ENCODE measurements at regions of chr1 and their contacts with region 1.

Region 1: GRCh38 chr1:48889082-48889481 is 112.4 kb upstream of the BEND5 start:
- DNase-seq: peak; percentile 72
- H3K4me3 ChIP-seq: no peak overlapping the region
- H3K27ac ChIP-seq: peak overlapping the region in 1 of 2 experiments; percentile 98; a peak in 2 of 4 replicates
- H3K4me1 ChIP-seq: peaks cover 0 to 31% of the 10 kb centered on the region in 2 experiments; a peak in 2 of 4 replicates
- H3K27me3 ChIP-seq: no peaks in the 10 kb centered on the region
- CTCF ChIP-seq: no peak
- EP300 ChIP-seq: peak in 1 of 2 experiments; percentile 94; a peak in 2 of 4 replicates
- RAD21 ChIP-seq: peak; percentile 26; the same call in 1 of the 2 replicates

Region 2: GRCh38 chr1:48776393-48777218 is 112.5 kb before region 1 on chr1 and contains the start of gene BEND5:
- CTCF ChIA-PET with region 1: no interaction called
- POLR2A ChIA-PET with region 1: no interaction called
- DNase-seq: peak; percentile 94
- H3K4me3 ChIP-seq: peak within 1 kb of the TSS; percentile 69 to 85
- H3K27ac ChIP-seq: peak within 1 kb of the TSS in 1 of 2 experiments; percentile 86; a peak in 2 of 4 replicates
- H3K4me1 ChIP-seq: peaks cover 4 to 14% of the 10 kb centered on the region in 2 experiments; a peak in 1 of 4 replicates
- H3K27me3 ChIP-seq: no peaks in the 10 kb centered on the region
- CTCF ChIP-seq: no peak
- EP300 ChIP-seq: no peak
- RAD21 ChIP-seq: no peak
- polyA plus RNA-seq, gene BEND5: 4.3 and 5.6 TPM in 2 replicates

Region 3: GRCh38 chr1:48859431-48859830 is 29.7 kb before region 1 on chr1:
- CTCF ChIA-PET with region 1: no interaction called
- POLR2A ChIA-PET with region 1: no interaction called
- DNase-seq: no peak
- H3K4me3 ChIP-seq: no peak overlapping the region
- H3K27ac ChIP-seq: no peak overlapping the region
- H3K4me1 ChIP-seq: peaks cover 0 to 4% of the 10 kb centered on the region in 2 experiments; a peak in 1 of 4 replicates
- H3K27me3 ChIP-seq: no peaks in the 10 kb centered on the region
- CTCF ChIP-seq: no peak
- EP300 ChIP-seq: no peak
- RAD21 ChIP-seq: no peak

Region 4: GRCh38 chr1:48878191-48878940 is 10.7 kb before region 1 on chr1:
- CTCF ChIA-PET with region 1: interaction called, 11 read pairs
- POLR2A ChIA-PET with region 1: interaction called, 4 read pairs
- DNase-seq: peak; percentile 30
- H3K4me3 ChIP-seq: peak overlapping the region; percentile 10 to 35; a peak in 2 of 4 replicates
- H3K27ac ChIP-seq: peak overlapping the region; percentile 88 to 89
- H3K4me1 ChIP-seq: peaks cover 24 to 34% of the 10 kb centered on the region in 2 experiments; a peak in 3 of 4 replicates
- H3K27me3 ChIP-seq: no peaks in the 10 kb centered on the region
- CTCF ChIP-seq: no peak
- EP300 ChIP-seq: peak; percentile 56 to 92
- RAD21 ChIP-seq: peak; percentile 6; the same call in 1 of the 2 replicates

Measured in SK-N-SH (cell line).